Right ventricle myocardium superior (tissue), 1 donor: ENCODE measurements at regions of chr2 and their contacts with region 1.

Region 1: GRCh38 chr2:230007931-230008707 is 60.6 kb downstream of the SLC16A14 start:
- DNase-seq: peak; percentile 85
- ATAC-seq: peak; percentile 74

Region 2: DNA sequence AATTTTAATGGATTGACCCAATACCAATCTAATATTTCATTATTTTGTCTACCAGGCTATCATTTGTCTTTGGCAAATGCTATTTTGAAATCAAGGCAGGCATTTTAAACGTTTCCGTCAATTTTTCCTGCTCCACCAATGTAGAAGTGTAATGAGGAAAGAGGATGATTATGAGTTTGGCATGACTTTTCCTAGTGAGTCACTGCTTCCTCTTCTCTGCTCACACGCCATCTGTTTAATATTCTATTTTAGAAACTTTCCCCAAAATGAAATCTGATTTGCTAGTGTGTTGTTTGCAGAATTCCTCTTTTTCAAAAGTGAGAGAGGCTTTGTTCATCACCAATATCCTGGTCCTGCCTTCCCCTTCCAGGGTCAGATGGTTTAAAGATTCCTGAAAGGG is 694.5 kb before region 1 on chr2:
- intact Hi-C with region 1: no loop called
- DNase-seq: no peak
- ATAC-seq: peak; percentile 86

Region 3: GRCh38 chr2:230160112-230160660 is 152.1 kb after region 1 on chr2:
- intact Hi-C with region 1: loop called (anchors 5 kb)
- DNase-seq: peak; percentile 57
- ATAC-seq: peak; percentile 80

Region 4: GRCh38 chr2:230218421-230218820 is 210.3 kb after region 1 on chr2:
- intact Hi-C with region 1: no loop called
- DNase-seq: no peak
- ATAC-seq: peak; percentile 40

Region 5: GRCh38 chr2:230614913-230615332 is 606.8 kb after region 1 on chr2:
- intact Hi-C with region 1: loop called (anchors 2 kb)
- DNase-seq: no peak
- ATAC-seq: no peak